B cell (primary cell): ENCODE measurements at regions of chr1 and their contacts with region 1.

Region 1: GRCh38 chr1:211323156-211324063 is 3.2 kb upstream of the TRAF5 start:
- DNase-seq: peak; percentile 81
- ATAC-seq: peak; percentile 56
- H3K4me3 ChIP-seq: no peak overlapping the region
- H3K4me3 Mint-ChIP-seq: no peak overlapping the region
- H3K27ac ChIP-seq: no peak overlapping the region
- H3K27ac Mint-ChIP-seq: no peak overlapping the region
- H3K4me1 ChIP-seq: peaks cover 28 to 34% of the 10 kb centered on the region in 2 donors
- H3K4me1 Mint-ChIP-seq: peaks cover 39% of the 10 kb centered on the region
- H3K27me3 ChIP-seq: no peaks in the 10 kb centered on the region
- H3K27me3 Mint-ChIP-seq: no peaks in the 10 kb centered on the region
- CTCF ChIP-seq: peak; percentile 94

Region 2: DNA sequence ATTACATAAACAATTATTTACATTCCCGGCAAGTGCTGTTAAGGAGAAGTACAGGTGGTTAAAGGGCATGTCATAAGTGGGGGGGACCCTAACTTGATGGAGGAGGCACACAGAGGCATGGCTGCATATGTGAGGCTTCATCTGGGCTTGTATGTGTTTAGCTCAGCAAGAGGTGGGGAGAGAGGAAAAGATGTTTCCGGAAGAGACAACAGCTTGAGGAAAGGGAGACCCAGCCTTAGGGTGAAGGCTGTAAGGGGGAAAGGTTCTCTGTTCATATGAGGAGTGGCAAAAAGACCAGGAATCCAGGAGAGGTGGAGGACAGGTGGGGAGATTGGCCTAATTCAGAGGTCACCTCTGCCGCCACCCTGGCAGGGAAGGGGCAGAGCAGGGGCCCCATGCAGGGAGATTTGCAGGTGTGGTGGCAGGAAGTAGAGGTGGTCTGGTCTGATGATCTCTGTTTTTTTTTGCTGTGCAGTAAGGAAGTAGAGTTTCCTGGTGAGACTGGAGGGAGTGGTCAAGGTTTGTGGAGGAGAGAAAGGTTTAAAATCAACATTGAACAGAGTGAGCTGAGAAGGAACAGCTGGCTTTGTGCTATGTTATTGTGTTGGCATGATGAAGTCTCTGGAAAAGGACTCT is 12.2 kb after region 1 on chr1:
- CTCF ChIA-PET with region 1: interaction called, 333 read pairs
- POLR2A ChIA-PET with region 1: interaction called, 20 read pairs
- intact Hi-C with region 1: loop called (anchors 1 kb)
- DNase-seq: peak; percentile 80
- ATAC-seq: peak; percentile 85
- H3K4me3 ChIP-seq: peak overlapping the region; percentile 17 to 54 (median 39)
- H3K4me3 Mint-ChIP-seq: peak overlapping the region; percentile 62
- H3K27ac ChIP-seq: peak overlapping the region; percentile 90 to 92
- H3K27ac Mint-ChIP-seq: peak overlapping the region; percentile 84
- H3K4me1 ChIP-seq: peaks cover 98 to 100% of the 10 kb centered on the region in 2 donors
- H3K4me1 Mint-ChIP-seq: peaks cover 92% of the 10 kb centered on the region
- H3K27me3 ChIP-seq: no peaks in the 10 kb centered on the region
- H3K27me3 Mint-ChIP-seq: no peaks in the 10 kb centered on the region
- CTCF ChIP-seq: no peak

Region 3: GRCh38 chr1:211359876-211360275 is 36.5 kb after region 1 on chr1:
- CTCF ChIA-PET with region 1: interaction called, 88 read pairs
- POLR2A ChIA-PET with region 1: no interaction called
- intact Hi-C with region 1: no loop called
- DNase-seq: no peak
- ATAC-seq: no peak
- H3K4me3 ChIP-seq: no peak overlapping the region
- H3K4me3 Mint-ChIP-seq: no peak overlapping the region
- H3K27ac ChIP-seq: peak overlapping the region in 1 of 2 donors; percentile 23
- H3K27ac Mint-ChIP-seq: peak overlapping the region; percentile 51
- H3K4me1 ChIP-seq: no peaks in the 10 kb centered on the region
- H3K4me1 Mint-ChIP-seq: peaks cover 10% of the 10 kb centered on the region
- H3K27me3 ChIP-seq: no peaks in the 10 kb centered on the region
- H3K27me3 Mint-ChIP-seq: no peaks in the 10 kb centered on the region
- CTCF ChIP-seq: no peak

Region 4: DNA sequence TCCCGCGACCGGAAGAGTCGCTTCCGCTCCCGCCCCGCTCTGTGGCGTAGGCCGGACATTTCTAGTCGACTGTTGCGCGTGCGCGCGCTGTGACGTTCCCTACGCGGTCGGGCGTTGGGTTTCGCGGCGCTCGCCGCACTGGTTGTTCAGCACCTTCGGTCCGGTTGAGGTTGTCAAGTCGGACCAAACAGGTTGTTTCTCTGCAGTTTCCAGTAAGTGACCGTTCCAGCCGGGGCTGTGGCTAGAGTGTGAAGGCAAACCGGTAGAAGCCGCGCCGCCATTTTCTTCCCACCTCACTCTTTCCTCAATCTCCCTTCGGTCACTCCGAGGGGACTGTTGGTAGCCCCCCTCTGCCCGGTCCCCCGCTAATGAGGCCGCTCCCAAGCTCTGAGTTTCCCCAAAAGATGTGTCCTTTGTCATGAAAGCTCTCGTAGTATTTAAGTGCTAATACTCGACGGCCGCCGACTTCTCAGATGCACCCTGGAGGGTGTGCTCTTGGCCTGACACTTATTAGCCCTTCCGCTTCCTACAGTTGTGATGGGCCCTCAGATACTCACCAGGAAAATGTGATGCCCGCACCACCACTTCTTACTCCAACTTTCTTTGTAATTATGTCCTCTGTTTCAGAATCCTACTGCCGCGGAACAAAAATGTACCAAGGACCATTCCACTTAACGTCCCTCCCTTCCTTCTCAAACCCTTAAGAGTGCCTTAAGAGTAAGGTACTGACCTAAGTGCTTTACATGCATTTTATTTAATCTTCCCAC is 59.5 kb after region 1 on chr1:
- CTCF ChIA-PET with region 1: interaction called, 13 read pairs
- POLR2A ChIA-PET with region 1: interaction called, 10 read pairs
- intact Hi-C with region 1: loop called (anchors 1 kb)
- DNase-seq: peak; percentile 89
- ATAC-seq: peak; percentile 96
- H3K4me3 ChIP-seq: peak overlapping the region; percentile 75 to 92 (median 88)
- H3K4me3 Mint-ChIP-seq: peak overlapping the region; percentile 89
- H3K27ac ChIP-seq: peak overlapping the region; percentile 96 to 98
- H3K27ac Mint-ChIP-seq: peak overlapping the region; percentile 100
- H3K4me1 ChIP-seq: peaks cover 13 to 14% of the 10 kb centered on the region in 2 donors
- H3K4me1 Mint-ChIP-seq: peaks cover 22% of the 10 kb centered on the region
- H3K27me3 ChIP-seq: no peaks in the 10 kb centered on the region
- H3K27me3 Mint-ChIP-seq: no peaks in the 10 kb centered on the region
- CTCF ChIP-seq: no peak

Region 5: GRCh38 chr1:211469938-211470529 is 146.6 kb after region 1 on chr1:
- CTCF ChIA-PET with region 1: interaction called, 118 read pairs
- POLR2A ChIA-PET with region 1: interaction called, 3 read pairs
- intact Hi-C with region 1: no loop called
- DNase-seq: peak; percentile 47
- ATAC-seq: no peak
- H3K4me3 ChIP-seq: no peak overlapping the region
- H3K4me3 Mint-ChIP-seq: no peak overlapping the region
- H3K27ac ChIP-seq: no peak overlapping the region
- H3K27ac Mint-ChIP-seq: no peak overlapping the region
- H3K4me1 ChIP-seq: peaks cover 0 to 4% of the 10 kb centered on the region in 2 donors
- H3K4me1 Mint-ChIP-seq: peaks cover 5% of the 10 kb centered on the region
- H3K27me3 ChIP-seq: peaks cover 0 to 3% (median 2%) of the 10 kb centered on the region in 4 experiments
- H3K27me3 Mint-ChIP-seq: peaks cover 5% of the 10 kb centered on the region
- CTCF ChIP-seq: peak; percentile 71

Region 6: GRCh38 chr1:211514030-211514754 is 190.8 kb after region 1 on chr1:
- CTCF ChIA-PET with region 1: interaction called, 42 read pairs
- POLR2A ChIA-PET with region 1: no interaction called
- intact Hi-C with region 1: loop called (anchors 1 kb)
- DNase-seq: peak; percentile 79
- ATAC-seq: peak; percentile 74
- H3K4me3 ChIP-seq: peak overlapping the region in 1 of 5 experiments; percentile 28
- H3K4me3 Mint-ChIP-seq: peak overlapping the region; percentile 86
- H3K27ac ChIP-seq: no peak overlapping the region
- H3K27ac Mint-ChIP-seq: peak overlapping the region; percentile 77
- H3K4me1 ChIP-seq: peaks cover 27 to 44% of the 10 kb centered on the region in 2 donors
- H3K4me1 Mint-ChIP-seq: peaks cover 40% of the 10 kb centered on the region
- H3K27me3 ChIP-seq: peaks cover 0 to 9% (median 3%) of the 10 kb centered on the region in 4 experiments
- H3K27me3 Mint-ChIP-seq: peaks cover 11% of the 10 kb centered on the region
- CTCF ChIP-seq: peak; percentile 81